A673 (cell line): ENCODE measurements at regions of chr11 and their contacts with region 1.

Region 1: DNA sequence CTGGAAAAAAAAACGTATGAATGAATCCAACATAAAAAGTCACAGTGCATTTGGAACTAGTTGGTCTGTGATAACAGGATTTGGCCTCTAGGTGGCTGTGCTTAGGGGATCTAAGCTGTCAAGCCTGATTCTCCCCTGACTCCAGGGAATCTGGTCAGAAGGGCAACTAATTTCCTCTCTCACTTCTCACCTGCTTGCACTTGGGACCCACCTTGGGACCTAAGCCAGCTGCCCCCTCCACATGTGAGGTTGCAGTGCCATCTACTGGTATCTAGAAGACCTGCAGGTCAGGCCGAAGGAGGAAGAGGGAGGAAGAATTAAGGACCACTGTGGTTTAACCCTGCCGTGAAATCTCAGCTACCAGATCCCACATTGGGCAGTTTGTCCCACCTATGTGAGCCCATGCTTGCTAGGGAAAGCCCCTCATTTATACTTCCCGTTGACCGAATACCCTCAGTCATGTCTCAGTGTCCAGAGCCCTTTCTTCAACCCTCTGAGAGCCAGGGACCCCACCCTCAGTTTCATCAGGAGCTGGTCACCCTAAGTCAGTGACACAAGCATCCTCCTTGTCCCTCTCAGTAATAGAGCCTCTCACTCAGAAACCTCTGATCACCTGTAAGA is 33.2 kb upstream of the CAVIN3 start:
- DNase-seq: peak; percentile 45
- H3K4me3 ChIP-seq: no peak overlapping the region
- H3K27ac ChIP-seq: no peak overlapping the region
- H3K4me1 ChIP-seq: peaks cover 6% of the 10 kb centered on the region
- H3K27me3 ChIP-seq: no peaks in the 10 kb centered on the region
- CTCF ChIP-seq: peak; percentile 93

Region 2: DNA sequence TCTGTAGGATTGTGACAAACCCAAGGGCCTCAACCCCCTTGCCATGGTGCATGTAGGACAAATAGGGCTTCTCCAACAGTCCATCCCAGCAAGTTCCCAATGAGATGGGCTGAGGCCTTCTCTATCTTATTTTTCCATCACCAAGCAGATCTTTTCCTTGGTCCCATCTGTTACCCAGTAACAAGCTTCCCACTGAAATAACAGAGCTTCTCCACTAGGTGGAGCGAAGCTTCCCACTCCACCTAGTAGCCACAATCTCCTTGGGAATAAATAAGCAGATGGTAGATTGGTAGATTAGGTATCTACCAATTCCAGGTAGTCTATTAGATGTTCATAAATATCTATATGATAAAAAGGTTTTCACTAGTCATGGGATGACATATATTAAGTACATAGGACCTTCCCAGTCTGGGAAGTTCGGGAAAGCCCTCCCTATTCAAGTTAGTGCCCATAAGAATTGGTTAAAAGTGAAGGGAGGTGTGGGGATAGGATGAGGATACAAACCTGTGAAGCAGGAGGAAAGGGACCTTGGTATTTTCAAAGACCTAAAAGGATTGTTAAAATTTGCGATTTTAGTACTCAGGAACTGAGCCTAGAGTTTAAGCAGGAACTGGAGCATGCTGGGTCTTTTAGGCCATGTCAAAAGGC is 360.7 kb before region 1 on chr11:
- CTCF ChIA-PET with region 1: no interaction called
- POLR2A ChIA-PET with region 1: no interaction called
- intact Hi-C with region 1: loop called (anchors 10 kb)
- DNase-seq: peak; percentile 35
- H3K4me3 ChIP-seq: no peak overlapping the region
- H3K27ac ChIP-seq: no peak overlapping the region
- H3K4me1 ChIP-seq: no peaks in the 10 kb centered on the region
- H3K27me3 ChIP-seq: no peaks in the 10 kb centered on the region
- CTCF ChIP-seq: peak; percentile 72

Region 3: DNA sequence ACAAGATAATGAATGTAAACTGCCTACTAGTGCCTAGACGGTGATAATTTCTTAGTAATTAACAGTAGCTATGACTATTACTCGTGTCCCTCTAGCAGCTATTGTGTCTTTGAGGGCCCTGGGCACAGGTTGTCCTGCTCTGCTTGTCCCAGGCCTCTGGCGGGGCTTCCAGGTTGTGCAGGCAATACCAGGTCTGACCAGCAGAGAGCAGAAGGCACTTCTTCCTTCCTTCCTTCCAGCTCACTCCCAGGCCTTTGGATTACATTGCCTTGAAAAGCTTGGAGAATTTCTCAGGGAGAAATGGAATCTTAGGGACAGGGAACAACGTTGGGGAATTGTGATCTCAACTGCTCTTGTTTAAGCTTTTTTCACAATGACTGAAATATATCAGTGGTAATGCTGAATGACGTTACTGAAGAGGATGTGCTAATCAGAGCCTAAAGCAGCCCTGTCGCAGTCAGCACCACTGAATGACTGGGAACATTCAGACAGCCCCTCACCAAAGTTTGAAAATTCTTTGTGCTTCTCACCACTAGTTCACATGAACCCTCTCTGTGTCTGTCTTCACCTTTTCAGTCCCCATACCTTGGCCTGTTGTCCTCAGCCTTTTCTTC is 102.2 kb before region 1 on chr11:
- CTCF ChIA-PET with region 1: no interaction called
- POLR2A ChIA-PET with region 1: no interaction called
- intact Hi-C with region 1: loop called (anchors 5 kb)
- DNase-seq: peak; percentile 71
- H3K4me3 ChIP-seq: no peak overlapping the region
- H3K27ac ChIP-seq: no peak overlapping the region
- H3K4me1 ChIP-seq: no peaks in the 10 kb centered on the region
- H3K27me3 ChIP-seq: peaks cover 8% of the 10 kb centered on the region
- CTCF ChIP-seq: peak; percentile 78

Region 4: DNA sequence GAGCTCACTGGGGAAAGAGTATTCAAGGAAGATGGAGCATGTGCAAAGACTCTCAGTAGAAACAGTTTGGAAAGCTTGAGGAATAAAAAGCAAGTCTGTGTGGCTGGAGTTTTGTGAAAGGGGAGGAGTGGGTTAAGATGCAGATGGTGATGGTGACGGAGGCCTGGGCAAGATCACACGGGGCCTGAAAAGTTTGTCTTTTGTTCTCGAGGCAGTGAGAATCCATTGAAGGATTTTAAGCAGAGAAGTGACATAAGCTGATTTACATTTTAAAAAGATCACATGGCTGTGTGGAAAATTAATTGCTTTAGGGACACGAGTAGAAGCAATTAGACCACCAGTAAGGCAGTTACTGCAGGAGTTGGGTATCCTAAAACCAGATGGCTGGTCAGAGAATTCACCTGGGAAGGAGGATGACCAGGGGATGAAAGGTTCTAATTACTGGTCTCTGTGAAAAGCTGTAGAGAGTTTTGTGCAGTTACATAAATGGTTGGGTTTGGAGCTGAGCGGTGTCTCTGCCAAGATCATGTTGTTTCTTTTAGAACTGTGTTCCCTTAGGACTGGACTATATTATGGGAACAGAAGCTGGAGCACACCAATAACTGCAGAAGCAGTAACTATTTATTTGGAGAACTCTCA is 242.9 kb after region 1 on chr11:
- CTCF ChIA-PET with region 1: no interaction called
- POLR2A ChIA-PET with region 1: no interaction called
- intact Hi-C with region 1: no loop called
- DNase-seq: no peak
- H3K4me3 ChIP-seq: no peak overlapping the region
- H3K27ac ChIP-seq: no peak overlapping the region
- H3K4me1 ChIP-seq: no peaks in the 10 kb centered on the region
- H3K27me3 ChIP-seq: no peaks in the 10 kb centered on the region
- CTCF ChIP-seq: no peak